ENCODE measurements at regions of chr2 and their contacts with region 1.

Region 1: GRCh38 chr2:48946449-48947048 is 191.0 kb upstream of the LHCGR start:
- DNase-seq: peak in 1 of 2 donors; percentile 7
- ATAC-seq: peak; percentile 81

Region 2: GRCh38 chr2:48808311-48808710 is 138.2 kb before region 1 on chr2:
- intact Hi-C with region 1: no loop called
- DNase-seq: no peak
- ATAC-seq: no peak

Region 3: GRCh38 chr2:50401772-50402653 is 1455.5 kb after region 1 on chr2:
- intact Hi-C with region 1: loop called in 1 of 2 experiments (anchors 5 kb)
- DNase-seq: peak in 1 of 2 donors; percentile 18
- ATAC-seq: no peak

Measured in left colon (tissue), 2 donors.